CD4-positive, alpha-beta memory T cell (primary cell): ENCODE measurements at regions of chr17 and their contacts with region 1.

Region 1: DNA sequence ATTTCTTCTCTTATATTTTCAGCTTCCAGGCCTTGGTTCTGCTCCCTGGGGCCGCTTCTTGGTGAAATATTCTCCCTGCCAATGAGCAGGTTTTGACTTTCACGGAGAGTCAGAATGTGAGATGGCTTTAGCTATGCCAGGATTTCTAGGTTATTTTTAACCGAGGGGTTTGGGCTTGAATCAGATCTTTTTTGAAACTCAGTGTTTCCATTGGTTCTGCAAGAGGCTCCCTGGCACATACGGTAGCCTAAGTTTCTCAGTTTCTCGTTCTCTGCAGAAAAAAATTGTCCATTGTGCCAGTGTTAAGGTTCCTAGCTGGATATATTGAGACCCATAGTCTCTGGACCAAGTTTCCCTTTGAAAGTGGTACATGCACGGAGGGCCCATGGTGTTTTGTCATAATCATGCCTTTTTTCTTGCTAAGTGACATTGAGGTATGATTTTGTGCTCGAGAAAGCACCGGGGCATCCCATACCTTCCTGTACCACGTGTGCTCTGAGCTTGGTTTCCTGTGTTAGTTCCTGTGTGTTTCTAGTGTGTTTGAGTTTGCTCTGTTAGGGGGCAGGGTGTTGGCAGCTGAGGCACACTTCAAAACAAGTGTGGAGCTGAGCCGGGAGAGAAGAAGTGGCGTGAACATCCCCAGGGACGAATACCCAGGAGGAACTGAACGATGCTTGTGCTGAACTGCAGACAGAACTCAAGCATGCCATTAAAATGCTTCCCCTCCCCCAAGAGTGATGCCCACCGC is 127.2 kb downstream of the HS3ST3B1 start:
- DNase-seq: peak; percentile 65 to 73 (median 69)
- H3K4me3 ChIP-seq: peak overlapping the region in 1 of 2 donors; percentile 39
- H3K4me3 Mint-ChIP-seq: peak overlapping the region; percentile 79 to 93 (median 86)
- H3K27ac ChIP-seq: peak overlapping the region; percentile 45
- H3K27ac Mint-ChIP-seq: peak overlapping the region; percentile 54 to 92 (median 88)
- H3K4me1 ChIP-seq: peaks cover 51% of the 10 kb centered on the region
- H3K4me1 Mint-ChIP-seq: peaks cover 48 to 62% (median 57%) of the 10 kb centered on the region in 4 donors
- H3K27me3 ChIP-seq: no peaks in the 10 kb centered on the region
- H3K27me3 Mint-ChIP-seq: no peaks in the 10 kb centered on the region

Region 2: GRCh38 chr17:14308965-14309879 is 118.9 kb before region 1 on chr17:
- CTCF ChIA-PET with region 1: interaction called, 3 read pairs
- POLR2A ChIA-PET with region 1: interaction called, 11 read pairs
- intact Hi-C with region 1: no loop called
- DNase-seq: peak; percentile 90 to 93 (median 92)
- H3K4me3 ChIP-seq: peak overlapping the region in 1 of 2 donors; percentile 52
- H3K4me3 Mint-ChIP-seq: peak overlapping the region; percentile 76 to 90 (median 82)
- H3K27ac ChIP-seq: peak overlapping the region; percentile 47
- H3K27ac Mint-ChIP-seq: peak overlapping the region; percentile 17 to 86 (median 69)
- H3K4me1 ChIP-seq: peaks cover 75% of the 10 kb centered on the region
- H3K4me1 Mint-ChIP-seq: peaks cover 57 to 87% (median 70%) of the 10 kb centered on the region in 4 donors
- H3K27me3 ChIP-seq: no peaks in the 10 kb centered on the region
- H3K27me3 Mint-ChIP-seq: no peaks in the 10 kb centered on the region

Region 3: DNA sequence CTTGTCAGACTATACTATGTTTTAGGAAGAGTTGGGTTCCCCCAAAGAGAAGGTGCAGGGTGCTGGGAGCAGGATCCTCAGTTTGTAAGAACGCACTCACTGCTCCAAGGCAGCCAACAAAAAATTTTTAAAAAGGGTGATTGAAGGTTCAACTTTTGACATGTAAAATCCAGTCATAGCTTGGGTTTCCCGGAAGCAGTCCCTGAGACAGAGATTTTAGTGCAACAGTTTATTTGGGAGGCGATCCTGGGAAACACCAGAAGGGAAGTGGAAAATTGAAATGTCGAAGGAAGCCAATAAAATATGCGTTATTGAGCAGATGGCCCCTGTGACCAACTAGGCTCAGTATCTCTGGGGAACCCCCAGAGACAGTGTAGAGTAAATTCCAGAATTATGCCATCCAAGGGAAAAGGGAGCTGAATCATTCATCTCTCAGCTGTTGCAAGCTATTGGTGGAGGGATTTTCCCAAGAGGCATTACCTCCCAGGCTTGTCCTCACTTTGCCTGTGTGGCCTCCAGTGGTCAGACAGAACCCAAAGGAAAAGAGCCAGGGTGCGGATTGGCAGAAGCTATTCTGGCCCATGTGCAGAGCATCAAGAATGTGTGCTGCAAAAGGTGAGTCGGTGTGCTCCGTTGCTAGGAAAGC is 54.3 kb before region 1 on chr17:
- CTCF ChIA-PET with region 1: no interaction called
- POLR2A ChIA-PET with region 1: no interaction called
- intact Hi-C with region 1: no loop called
- DNase-seq: no peak
- H3K4me3 ChIP-seq: no peak overlapping the region
- H3K4me3 Mint-ChIP-seq: no peak overlapping the region
- H3K27ac ChIP-seq: no peak overlapping the region
- H3K27ac Mint-ChIP-seq: no peak overlapping the region
- H3K4me1 ChIP-seq: no peaks in the 10 kb centered on the region
- H3K4me1 Mint-ChIP-seq: peaks cover 0 to 2% (median under 1%) of the 10 kb centered on the region in 4 donors
- H3K27me3 ChIP-seq: no peaks in the 10 kb centered on the region
- H3K27me3 Mint-ChIP-seq: no peaks in the 10 kb centered on the region

Region 4: DNA sequence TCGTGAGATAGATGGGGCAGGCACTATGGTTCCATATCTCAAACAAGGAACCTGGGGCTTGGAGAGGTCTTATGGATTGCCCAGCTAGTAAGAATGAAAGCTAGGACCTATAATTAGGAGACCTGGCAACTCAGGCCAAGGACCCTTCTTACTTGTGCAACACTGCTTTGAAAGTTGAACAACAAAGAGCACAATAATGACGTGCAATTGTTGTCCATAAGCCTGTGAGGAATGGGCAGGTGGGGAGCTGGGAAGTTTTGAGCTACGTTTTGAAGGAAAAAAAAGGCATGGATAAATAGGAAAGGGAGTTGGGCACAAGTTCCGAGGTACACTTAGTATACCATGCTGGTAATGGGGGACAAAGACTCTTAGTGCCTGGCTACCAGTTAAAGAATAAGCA is 22.9 kb before region 1 on chr17:
- CTCF ChIA-PET with region 1: interaction called, 8 read pairs
- POLR2A ChIA-PET with region 1: interaction called, 28 read pairs
- intact Hi-C with region 1: loop called (anchors 2 kb)
- DNase-seq: no peak
- H3K4me3 ChIP-seq: no peak overlapping the region
- H3K4me3 Mint-ChIP-seq: peak overlapping the region in 1 of 8 donors; percentile 24
- H3K27ac ChIP-seq: no peak overlapping the region
- H3K27ac Mint-ChIP-seq: peak overlapping the region in 3 of 7 donors; percentile 70 to 85 (median 74)
- H3K4me1 ChIP-seq: peaks cover 21% of the 10 kb centered on the region
- H3K4me1 Mint-ChIP-seq: peaks cover 17 to 26% (median 22%) of the 10 kb centered on the region in 4 donors
- H3K27me3 ChIP-seq: no peaks in the 10 kb centered on the region
- H3K27me3 Mint-ChIP-seq: no peaks in the 10 kb centered on the region